Endothelial cell of umbilical vein (primary cell): ENCODE measurements at regions of chr7 and their contacts with region 1.

Region 1: GRCh38 chr7:91759215-91759871 is 121.2 kb downstream of the MTERF1 start:
- DNase-seq: no peak
- H3K4me3 ChIP-seq: no peak overlapping the region
- H3K27ac ChIP-seq: no peak overlapping the region
- H3K4me1 ChIP-seq: no peaks in the 10 kb centered on the region
- H3K27me3 ChIP-seq: no peaks in the 10 kb centered on the region
- CTCF ChIP-seq: no peak
- POLR2A ChIP-seq: no peak

Region 2: GRCh38 chr7:91692800-91693199 is 66.5 kb before region 1 on chr7:
- CTCF ChIA-PET with region 1: no interaction called
- POLR2A ChIA-PET with region 1: no interaction called
- dilution Hi-C with region 1: no loop called
- intact Hi-C with region 1: loop called (anchors 10 kb)
- DNase-seq: peak; percentile 39
- H3K4me3 ChIP-seq: no peak overlapping the region
- H3K27ac ChIP-seq: no peak overlapping the region
- H3K4me1 ChIP-seq: no peaks in the 10 kb centered on the region
- H3K27me3 ChIP-seq: no peaks in the 10 kb centered on the region
- CTCF ChIP-seq: no peak
- POLR2A ChIP-seq: no peak

Region 3: DNA sequence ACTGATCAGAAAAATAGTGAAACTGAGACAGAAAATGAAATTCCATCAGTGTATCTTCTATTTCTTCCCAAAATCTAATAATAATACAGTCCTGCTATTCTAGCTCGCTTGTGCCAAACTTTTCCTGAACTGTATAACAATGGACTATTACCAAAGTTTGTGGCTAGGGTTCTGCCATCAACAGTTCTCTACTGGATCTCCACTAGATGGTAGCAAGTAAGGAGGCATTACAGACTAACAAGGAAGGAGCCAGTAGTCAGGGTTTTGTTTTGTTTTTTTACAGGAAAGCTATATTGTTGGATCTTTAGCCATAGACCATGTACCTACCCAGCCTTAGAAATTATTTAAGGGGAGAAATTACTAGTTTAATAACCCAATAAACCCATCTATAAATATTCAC is 110.3 kb after region 1 on chr7:
- CTCF ChIA-PET with region 1: no interaction called
- POLR2A ChIA-PET with region 1: no interaction called
- dilution Hi-C with region 1: no loop called
- intact Hi-C with region 1: no loop called
- DNase-seq: no peak
- H3K4me3 ChIP-seq: no peak overlapping the region
- H3K27ac ChIP-seq: no peak overlapping the region
- H3K4me1 ChIP-seq: no peaks in the 10 kb centered on the region
- H3K27me3 ChIP-seq: no peaks in the 10 kb centered on the region
- CTCF ChIP-seq: no peak
- POLR2A ChIP-seq: no peak